Activated CD4-positive, alpha-beta memory T cell treated with anti-CD3 and anti-CD28 coated beads, Interleukin-2, amount 10 ng/mL, durations not matched to agents 7 days and 5 days (primary cell): ENCODE measurements at regions of chr5 and their contacts with region 1.

Region 1: DNA sequence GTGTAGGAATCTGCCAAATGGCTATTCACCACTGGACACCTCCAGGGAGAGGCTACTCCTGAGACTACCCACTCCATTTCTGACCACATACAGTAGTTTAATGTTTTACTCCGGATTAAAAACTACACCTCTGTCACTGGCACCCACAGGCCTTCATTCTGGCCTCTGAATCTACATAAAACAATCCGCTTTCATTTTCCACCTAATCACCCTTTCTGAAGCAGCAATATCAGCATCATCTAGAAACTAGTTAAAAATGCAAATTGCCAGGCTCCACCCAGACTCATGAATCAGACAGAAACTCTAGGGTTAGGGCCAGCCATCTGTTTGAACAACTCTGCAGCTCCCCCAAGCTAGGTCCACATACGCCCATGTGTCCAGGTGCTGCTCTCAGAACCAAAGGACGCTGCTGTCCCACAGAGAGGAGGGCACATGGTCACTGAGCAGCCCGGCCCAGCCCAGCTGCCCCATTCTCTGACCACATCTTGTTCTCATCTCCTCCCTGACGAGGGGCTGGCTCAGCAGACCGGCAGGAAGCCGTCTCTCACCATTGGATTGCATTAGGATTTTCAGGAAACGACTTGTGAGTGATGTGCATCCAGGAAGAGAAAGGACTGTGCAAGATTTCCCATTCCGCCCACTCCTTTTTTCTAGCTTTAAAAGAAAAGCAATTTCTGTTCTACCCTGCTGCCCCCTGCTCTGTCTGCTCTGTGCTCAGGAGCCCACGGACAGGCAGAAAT is 34.7 kb downstream of the ADAM19 start:
- DNase-seq: peak; percentile 75
- H3K4me3 Mint-ChIP-seq: peak overlapping the region; percentile 67
- H3K27ac Mint-ChIP-seq: peak overlapping the region; percentile 89
- H3K4me1 Mint-ChIP-seq: peaks cover 96% of the 10 kb centered on the region
- H3K27me3 Mint-ChIP-seq: no peaks in the 10 kb centered on the region

Region 2: DNA sequence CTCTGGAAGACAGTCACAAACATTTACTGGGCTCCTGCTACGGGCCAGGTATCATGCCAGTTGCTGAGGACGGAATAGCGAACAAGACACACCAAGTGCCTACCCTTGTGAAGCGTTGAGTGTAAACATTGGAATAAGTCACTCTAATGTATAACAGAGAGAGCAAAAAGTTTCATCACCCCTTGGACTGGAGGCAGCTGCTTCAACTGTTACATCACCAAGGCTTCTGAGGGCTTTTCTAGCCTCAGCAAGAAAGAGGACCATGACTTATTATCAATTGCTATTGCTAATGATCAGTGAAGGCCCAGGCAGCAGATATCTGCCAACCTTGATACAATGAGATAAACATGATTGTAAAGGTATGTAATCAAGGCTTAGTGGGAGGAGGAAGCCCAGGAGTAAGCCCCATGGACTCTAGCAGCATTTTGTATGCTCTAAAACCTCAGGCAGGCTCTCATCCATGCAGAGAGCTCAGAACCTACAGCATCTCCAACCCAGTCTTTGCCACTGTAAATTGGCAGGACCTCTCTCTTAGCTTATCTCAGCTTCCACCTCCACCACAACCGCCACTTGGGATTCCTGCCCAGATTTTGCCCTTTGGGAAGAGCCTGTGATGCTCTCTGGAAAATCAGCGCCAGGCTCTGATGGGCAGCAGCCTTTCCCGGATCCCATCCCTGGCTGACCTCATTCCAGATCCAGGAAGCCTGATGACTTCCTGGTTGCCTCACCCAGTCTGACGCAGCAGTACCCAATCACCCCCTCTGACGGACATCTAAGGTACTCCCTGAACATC is 19.8 kb before region 1 on chr5:
- CTCF ChIA-PET with region 1: interaction called, 14 read pairs
- POLR2A ChIA-PET with region 1: interaction called, 15 read pairs
- DNase-seq: no peak
- H3K4me3 Mint-ChIP-seq: no peak overlapping the region
- H3K27ac Mint-ChIP-seq: peak overlapping the region; percentile 43
- H3K4me1 Mint-ChIP-seq: peaks cover 68% of the 10 kb centered on the region
- H3K27me3 Mint-ChIP-seq: no peaks in the 10 kb centered on the region

Region 3: DNA sequence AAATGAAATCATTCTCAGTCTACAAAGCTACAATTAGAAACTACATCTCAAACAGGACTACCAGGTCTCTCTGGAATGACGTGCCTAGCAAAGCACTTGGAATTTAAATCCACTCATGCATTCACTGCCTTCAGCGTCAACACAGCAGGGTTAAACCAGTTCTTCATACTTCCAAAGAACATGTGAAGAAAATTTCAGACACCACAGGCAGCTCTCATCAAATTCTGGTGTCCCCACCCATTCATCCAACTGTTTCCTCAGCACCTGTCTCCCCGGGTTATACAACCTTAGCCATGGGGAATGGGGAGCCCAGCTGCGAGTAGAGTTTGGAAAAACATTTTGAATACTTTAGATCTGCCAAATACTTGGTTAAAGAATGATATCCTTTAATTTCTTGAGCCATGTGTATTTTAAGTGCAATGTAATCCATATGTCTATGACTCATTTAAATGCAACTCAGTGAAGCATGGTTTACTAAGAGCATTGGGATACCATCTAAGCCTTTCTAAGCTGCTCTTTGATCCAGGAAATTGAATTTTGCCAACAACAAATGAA is 17.2 kb after region 1 on chr5:
- CTCF ChIA-PET with region 1: interaction called, 13 read pairs
- POLR2A ChIA-PET with region 1: interaction called, 23 read pairs
- DNase-seq: no peak
- H3K4me3 Mint-ChIP-seq: no peak overlapping the region
- H3K27ac Mint-ChIP-seq: peak overlapping the region; percentile 61
- H3K4me1 Mint-ChIP-seq: peaks cover 89% of the 10 kb centered on the region
- H3K27me3 Mint-ChIP-seq: no peaks in the 10 kb centered on the region

Region 4: DNA sequence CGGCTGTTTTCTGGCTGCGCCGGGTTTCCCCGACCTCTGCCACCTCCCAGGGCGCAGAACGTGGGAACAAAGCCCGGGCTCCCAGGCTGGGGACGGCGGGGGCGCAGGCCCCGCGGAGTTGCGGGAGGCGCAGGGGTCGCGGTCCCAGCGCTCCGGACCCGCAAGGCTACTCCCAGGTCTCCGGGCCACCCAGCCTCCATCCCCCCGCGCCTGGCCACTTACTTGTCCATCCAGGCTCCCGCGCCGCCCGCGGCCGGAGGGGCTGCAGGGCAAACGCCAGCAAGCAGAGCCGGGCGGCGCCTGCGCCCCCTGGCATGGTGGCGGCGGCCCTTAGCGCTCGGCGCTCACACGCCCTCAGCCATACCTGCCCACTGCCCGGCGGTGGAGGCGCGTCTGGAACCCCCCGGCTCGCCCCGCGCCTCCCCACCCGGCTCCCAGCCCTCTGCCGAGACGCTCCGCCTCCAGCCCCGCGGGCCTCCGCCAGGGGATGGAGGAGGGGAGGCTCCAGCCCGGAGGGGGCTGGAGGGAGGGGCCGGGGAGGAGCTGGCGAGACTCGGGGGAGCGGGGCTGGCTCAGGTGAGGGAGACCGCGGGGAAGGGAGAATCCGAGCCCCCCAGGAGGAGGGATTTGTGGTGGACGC is 34.6 kb after region 1 on chr5 and contains the start of gene ADAM19:
- CTCF ChIA-PET with region 1: interaction called, 9 read pairs
- POLR2A ChIA-PET with region 1: interaction called, 193 read pairs
- DNase-seq: peak; percentile 67
- H3K4me3 Mint-ChIP-seq: peak within 1 kb of the TSS; percentile 92
- H3K27ac Mint-ChIP-seq: peak within 1 kb of the TSS; percentile 88
- H3K4me1 Mint-ChIP-seq: peaks cover 59% of the 10 kb centered on the region
- H3K27me3 Mint-ChIP-seq: no peaks in the 10 kb centered on the region
- total RNA-seq, gene ADAM19: 309 to 313 TPM

Region 5: DNA sequence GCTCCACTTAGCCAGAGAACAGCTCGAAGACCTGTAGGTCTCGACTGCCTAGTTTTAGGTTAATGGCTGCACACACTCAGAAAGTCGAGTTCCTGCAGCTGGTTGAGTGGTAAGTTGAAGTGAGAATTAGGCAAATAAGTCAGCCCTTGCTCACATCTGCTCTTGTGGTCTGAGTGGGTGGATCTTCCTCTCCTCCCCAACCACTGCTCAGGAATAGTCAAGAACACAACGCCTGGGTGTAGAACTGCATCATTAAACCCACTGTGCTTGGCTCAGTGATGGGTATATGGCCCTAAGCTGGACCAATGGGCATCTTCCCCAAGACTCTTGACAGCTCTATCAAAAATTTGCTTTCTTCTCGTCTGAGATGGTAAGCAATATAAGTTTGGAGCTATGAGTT is 55.6 kb after region 1 on chr5:
- CTCF ChIA-PET with region 1: interaction called, 6 read pairs
- POLR2A ChIA-PET with region 1: interaction called, 73 read pairs
- DNase-seq: peak; percentile 72
- H3K4me3 Mint-ChIP-seq: peak overlapping the region; percentile 23
- H3K27ac Mint-ChIP-seq: peak overlapping the region; percentile 87
- H3K4me1 Mint-ChIP-seq: peaks cover 96% of the 10 kb centered on the region
- H3K27me3 Mint-ChIP-seq: no peaks in the 10 kb centered on the region

Region 6: GRCh38 chr5:157603333-157604190 is 62.7 kb after region 1 on chr5:
- CTCF ChIA-PET with region 1: interaction called, 6 read pairs
- POLR2A ChIA-PET with region 1: interaction called, 73 read pairs
- DNase-seq: peak; percentile 81
- H3K4me3 Mint-ChIP-seq: peak overlapping the region; percentile 9
- H3K27ac Mint-ChIP-seq: peak overlapping the region; percentile 82
- H3K4me1 Mint-ChIP-seq: peaks cover 87% of the 10 kb centered on the region
- H3K27me3 Mint-ChIP-seq: no peaks in the 10 kb centered on the region